ENCODE measurements at regions of chr12 and their contacts with region 1.

Region 1: DNA sequence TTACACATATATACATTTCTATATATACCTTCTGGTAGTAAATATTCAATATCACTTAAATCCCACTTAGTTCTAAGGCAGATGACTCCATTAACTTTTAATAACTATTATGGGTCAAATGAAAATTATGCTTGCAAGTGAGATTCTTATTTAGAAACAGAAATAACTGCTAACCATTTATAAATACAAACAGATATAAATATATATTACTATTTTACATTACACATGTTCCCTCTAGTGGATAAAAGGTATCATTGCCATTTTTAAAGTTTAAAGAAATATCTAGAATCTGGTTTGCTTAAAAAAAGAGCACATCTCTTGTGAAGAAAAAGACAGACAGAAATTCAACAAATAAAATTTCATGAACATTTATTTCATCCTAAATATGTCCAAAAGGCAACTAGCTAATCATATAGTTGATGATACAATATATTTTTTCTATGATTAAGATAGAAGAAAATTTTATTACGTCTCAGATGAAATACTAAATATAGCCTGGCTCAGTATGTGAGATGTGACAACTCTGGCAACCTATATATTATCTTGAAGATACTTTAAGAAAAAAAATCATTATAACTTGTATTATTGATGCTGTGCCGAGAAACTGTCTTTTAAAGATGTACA is 11.7 kb upstream of the RAD51AP1 start:
- DNase-seq: no peak
- ATAC-seq: no peak
- H3K4me3 Mint-ChIP-seq: no peak overlapping the region
- H3K27ac Mint-ChIP-seq: no peak overlapping the region
- H3K4me1 Mint-ChIP-seq: peaks cover 5% of the 10 kb centered on the region
- H3K27me3 Mint-ChIP-seq: no peaks in the 10 kb centered on the region

Region 2: DNA sequence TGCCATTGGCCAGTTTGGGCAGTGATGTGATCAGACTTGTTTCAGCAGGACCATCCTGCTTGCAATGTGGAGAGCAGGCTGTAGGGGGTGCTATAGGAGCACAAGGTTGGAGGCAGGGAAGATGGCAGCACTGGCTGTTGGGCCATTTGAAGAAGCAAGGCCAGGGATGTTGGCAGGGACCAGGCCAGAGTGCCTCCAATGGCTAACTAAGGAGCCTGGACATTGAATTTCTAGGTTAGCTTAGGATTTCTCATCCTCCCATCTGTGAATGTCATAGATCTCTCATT is 171.1 kb before region 1 on chr12:
- CTCF ChIA-PET with region 1: interaction called, 4 read pairs
- POLR2A ChIA-PET with region 1: no interaction called
- intact Hi-C with region 1: loop called (anchors 1 to 2 kb)
- DNase-seq: peak; percentile 85
- ATAC-seq: peak; percentile 73
- H3K4me3 Mint-ChIP-seq: no peak overlapping the region
- H3K27ac Mint-ChIP-seq: no peak overlapping the region
- H3K4me1 Mint-ChIP-seq: no peaks in the 10 kb centered on the region
- H3K27me3 Mint-ChIP-seq: no peaks in the 10 kb centered on the region

Region 3: GRCh38 chr12:4421590-4422031 is 105.4 kb before region 1 on chr12:
- CTCF ChIA-PET with region 1: interaction called, 47 read pairs
- POLR2A ChIA-PET with region 1: no interaction called
- intact Hi-C with region 1: loop called (anchors 1 kb)
- DNase-seq: peak; percentile 16
- ATAC-seq: peak; percentile 61
- H3K4me3 Mint-ChIP-seq: no peak overlapping the region
- H3K27ac Mint-ChIP-seq: no peak overlapping the region
- H3K4me1 Mint-ChIP-seq: no peaks in the 10 kb centered on the region
- H3K27me3 Mint-ChIP-seq: peaks cover 5% of the 10 kb centered on the region

Region 4: DNA sequence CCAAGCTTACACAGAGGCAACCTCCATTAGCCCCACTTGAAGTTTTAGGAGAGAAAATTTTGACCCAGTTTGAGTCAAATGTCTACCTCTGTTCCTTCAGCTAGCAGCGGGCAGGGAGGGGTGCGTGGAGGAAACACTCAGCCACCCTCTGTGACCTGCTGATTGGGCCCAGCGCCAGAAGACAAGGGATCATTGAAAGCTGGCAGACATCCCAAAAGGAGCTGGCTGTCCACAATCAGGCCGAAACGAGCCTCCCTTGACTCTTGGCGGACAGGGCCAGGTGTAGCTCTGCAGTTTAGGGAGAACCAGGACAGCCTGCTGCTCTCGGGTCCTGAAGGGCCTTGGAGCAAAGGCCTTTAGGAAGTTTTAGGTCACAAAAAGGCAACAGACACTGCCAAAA is 1714.5 kb after region 1 on chr12:
- CTCF ChIA-PET with region 1: no interaction called
- POLR2A ChIA-PET with region 1: interaction called, 10 read pairs
- intact Hi-C with region 1: no loop called
- DNase-seq: no peak
- ATAC-seq: no peak
- H3K4me3 Mint-ChIP-seq: no peak overlapping the region
- H3K27ac Mint-ChIP-seq: no peak overlapping the region
- H3K4me1 Mint-ChIP-seq: no peaks in the 10 kb centered on the region
- H3K27me3 Mint-ChIP-seq: no peaks in the 10 kb centered on the region

Measured in activated CD4-positive, alpha-beta T cell treated with anti-CD3 and anti-CD28 coated beads for 36 hours (primary cell).